Heart left ventricle (tissue), 16 donors: ENCODE measurements at regions of chr2 and their contacts with region 1.

Region 1: GRCh38 chr2:198273660-198274059 is 469.3 kb downstream of the PLCL1 start:
- DNase-seq: no peak
- ATAC-seq: no peak
- H3K4me3 ChIP-seq: no peak overlapping the region
- H3K27ac ChIP-seq: no peak overlapping the region
- H3K4me1 ChIP-seq: peaks cover 0 to 3% (median 0%) of the 10 kb centered on the region in 12 donors
- H3K27me3 ChIP-seq: no peaks in the 10 kb centered on the region
- CTCF ChIP-seq: no peak
- POLR2A ChIP-seq: no peak

Region 2: GRCh38 chr2:198135481-198135934 is 138.2 kb before region 1 on chr2:
- intact Hi-C with region 1: loop called in 1 of 10 experiments (anchors 10 kb)
- DNase-seq: no peak
- ATAC-seq: no peak
- H3K4me3 ChIP-seq: no peak overlapping the region
- H3K27ac ChIP-seq: no peak overlapping the region
- H3K4me1 ChIP-seq: peaks cover 0 to 20% (median 3%) of the 10 kb centered on the region in 12 donors
- H3K27me3 ChIP-seq: no peaks in the 10 kb centered on the region
- CTCF ChIP-seq: no peak
- POLR2A ChIP-seq: no peak